Natural killer cell (primary cell): ENCODE measurements at regions of chr3 and their contacts with region 1.

Region 1: GRCh38 chr3:32374788-32375595 is 16.7 kb upstream of the CMTM7 start:
- DNase-seq: peak; percentile 31 to 91
- ATAC-seq: peak; percentile 77 to 90 (median 87)
- H3K4me3 ChIP-seq: no peak overlapping the region
- H3K4me3 Mint-ChIP-seq: no peak overlapping the region
- H3K27ac ChIP-seq: no peak overlapping the region
- H3K27ac Mint-ChIP-seq: no peak overlapping the region
- H3K4me1 ChIP-seq: no peaks in the 10 kb centered on the region
- H3K4me1 Mint-ChIP-seq: peaks cover 6 to 9% of the 10 kb centered on the region in 2 donors
- H3K27me3 ChIP-seq: no peaks in the 10 kb centered on the region
- H3K27me3 Mint-ChIP-seq: peaks cover 0 to 2% of the 10 kb centered on the region in 2 donors
- CTCF ChIP-seq: peak; percentile 72

Region 2: GRCh38 chr3:32399030-32399620 is 24.1 kb after region 1 on chr3:
- intact Hi-C with region 1: loop called (anchors 1 kb)
- DNase-seq: peak in 1 of 2 donors; percentile 87
- ATAC-seq: peak; percentile 37 to 45 (median 42)
- H3K4me3 ChIP-seq: no peak overlapping the region
- H3K4me3 Mint-ChIP-seq: peak overlapping the region; percentile 45
- H3K27ac ChIP-seq: no peak overlapping the region
- H3K27ac Mint-ChIP-seq: peak overlapping the region; percentile 10 to 31
- H3K4me1 ChIP-seq: peaks cover 29% of the 10 kb centered on the region
- H3K4me1 Mint-ChIP-seq: peaks cover 39 to 41% of the 10 kb centered on the region in 2 donors
- H3K27me3 ChIP-seq: no peaks in the 10 kb centered on the region
- H3K27me3 Mint-ChIP-seq: no peaks in the 10 kb centered on the region
- CTCF ChIP-seq: peak; percentile 68

Region 3: DNA sequence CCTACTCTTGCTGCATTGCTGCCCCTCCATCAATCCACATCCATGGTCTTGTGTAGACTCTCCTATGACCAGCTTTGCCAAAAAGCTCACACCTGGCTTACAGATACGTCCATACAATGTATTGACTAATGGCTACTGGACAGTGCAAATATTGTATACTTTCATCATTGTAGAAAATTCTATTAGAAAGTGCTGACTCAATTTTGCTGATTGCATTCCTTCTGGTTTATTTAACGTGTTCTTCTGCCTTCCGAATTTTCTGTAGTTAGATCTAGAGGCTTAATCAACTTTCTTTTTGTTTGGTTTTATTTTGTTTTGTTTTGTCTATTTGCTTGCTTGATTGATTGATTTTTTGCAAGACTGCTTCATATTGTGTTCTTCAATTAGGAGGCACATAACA is 280.2 kb after region 1 on chr3:
- intact Hi-C with region 1: loop called (anchors 5 kb)
- DNase-seq: no peak
- ATAC-seq: no peak
- H3K4me3 ChIP-seq: no peak overlapping the region
- H3K4me3 Mint-ChIP-seq: no peak overlapping the region
- H3K27ac ChIP-seq: no peak overlapping the region
- H3K27ac Mint-ChIP-seq: no peak overlapping the region
- H3K4me1 ChIP-seq: no peaks in the 10 kb centered on the region
- H3K4me1 Mint-ChIP-seq: no peaks in the 10 kb centered on the region
- H3K27me3 ChIP-seq: no peaks in the 10 kb centered on the region
- H3K27me3 Mint-ChIP-seq: peaks cover 10 to 21% of the 10 kb centered on the region in 2 donors
- CTCF ChIP-seq: no peak